AG04450 (cell line): ENCODE measurements at regions of chr4 and their contacts with region 1.

Region 1: DNA sequence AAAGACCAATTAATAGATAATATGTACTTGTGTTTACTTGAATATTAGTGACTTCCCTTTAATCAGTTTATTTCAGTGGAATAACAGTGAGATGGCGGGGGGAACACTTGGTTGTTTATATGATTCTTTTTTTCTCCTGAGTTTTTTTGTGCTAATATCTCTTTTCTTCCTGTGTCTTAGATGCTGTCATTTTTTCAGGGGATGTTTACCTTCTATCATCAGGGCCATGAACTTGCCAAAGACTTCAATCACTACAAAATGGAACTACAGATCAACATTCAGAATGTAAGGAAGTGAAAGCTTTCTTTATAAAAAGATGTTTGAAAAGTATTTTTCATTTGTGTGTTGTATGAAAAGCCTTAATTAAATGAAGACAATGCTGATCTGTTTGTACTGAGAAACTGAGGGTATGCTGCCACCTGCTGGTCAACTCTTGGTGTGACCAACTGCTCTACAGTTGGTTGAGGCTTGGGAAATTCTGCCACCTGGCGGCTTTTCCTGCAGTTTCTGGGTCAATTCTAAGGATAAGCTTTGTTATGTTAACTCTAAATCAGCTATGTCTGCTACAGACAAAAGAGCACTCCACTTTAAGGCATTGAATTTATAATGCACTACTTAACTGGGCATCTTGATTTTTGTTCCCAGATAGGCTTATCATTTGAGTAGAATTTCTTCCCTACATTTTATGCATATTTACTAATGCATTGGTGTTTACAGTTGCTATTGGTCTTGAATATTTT is 134.8 kb downstream of the ARHGAP10 start:
- DNase-seq: peak; percentile 85
- H3K4me3 ChIP-seq: no peak overlapping the region
- H3K27ac ChIP-seq: no peak overlapping the region
- H3K27me3 ChIP-seq: no peaks in the 10 kb centered on the region
- CTCF ChIP-seq: peak; percentile 99

Region 2: GRCh38 chr4:147111033-147111367 is 755.7 kb before region 1 on chr4:
- CTCF ChIA-PET with region 1: interaction called, 18 read pairs
- POLR2A ChIA-PET with region 1: no interaction called
- DNase-seq: no peak
- H3K4me3 ChIP-seq: no peak overlapping the region
- H3K27ac ChIP-seq: no peak overlapping the region
- H3K27me3 ChIP-seq: no peaks in the 10 kb centered on the region
- CTCF ChIP-seq: no peak; the same call in 1 of the 2 replicates

Region 3: DNA sequence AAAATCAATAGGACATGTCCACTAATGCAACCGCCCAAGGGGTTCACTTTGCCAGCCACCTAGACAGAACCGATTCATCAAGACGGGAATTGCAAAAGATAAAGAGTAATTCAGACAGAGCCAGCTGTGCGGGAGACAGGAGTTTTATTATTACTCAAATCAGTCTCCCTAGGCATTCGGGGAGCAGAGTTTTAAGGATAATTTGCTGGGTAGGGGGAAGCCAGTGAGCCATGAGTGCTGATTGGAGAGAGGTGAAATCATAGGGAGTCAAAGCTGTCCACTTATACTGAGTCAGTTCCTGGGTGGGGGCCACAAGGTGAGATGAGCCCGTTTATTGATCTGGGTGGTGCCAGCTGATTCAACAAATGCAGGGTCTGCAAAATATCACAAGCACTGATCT is 241.0 kb before region 1 on chr4:
- CTCF ChIA-PET with region 1: interaction called, 82 read pairs
- POLR2A ChIA-PET with region 1: no interaction called
- DNase-seq: no peak
- H3K4me3 ChIP-seq: no peak overlapping the region
- H3K27ac ChIP-seq: no peak overlapping the region
- H3K27me3 ChIP-seq: no peaks in the 10 kb centered on the region
- CTCF ChIP-seq: no peak

Region 4: DNA sequence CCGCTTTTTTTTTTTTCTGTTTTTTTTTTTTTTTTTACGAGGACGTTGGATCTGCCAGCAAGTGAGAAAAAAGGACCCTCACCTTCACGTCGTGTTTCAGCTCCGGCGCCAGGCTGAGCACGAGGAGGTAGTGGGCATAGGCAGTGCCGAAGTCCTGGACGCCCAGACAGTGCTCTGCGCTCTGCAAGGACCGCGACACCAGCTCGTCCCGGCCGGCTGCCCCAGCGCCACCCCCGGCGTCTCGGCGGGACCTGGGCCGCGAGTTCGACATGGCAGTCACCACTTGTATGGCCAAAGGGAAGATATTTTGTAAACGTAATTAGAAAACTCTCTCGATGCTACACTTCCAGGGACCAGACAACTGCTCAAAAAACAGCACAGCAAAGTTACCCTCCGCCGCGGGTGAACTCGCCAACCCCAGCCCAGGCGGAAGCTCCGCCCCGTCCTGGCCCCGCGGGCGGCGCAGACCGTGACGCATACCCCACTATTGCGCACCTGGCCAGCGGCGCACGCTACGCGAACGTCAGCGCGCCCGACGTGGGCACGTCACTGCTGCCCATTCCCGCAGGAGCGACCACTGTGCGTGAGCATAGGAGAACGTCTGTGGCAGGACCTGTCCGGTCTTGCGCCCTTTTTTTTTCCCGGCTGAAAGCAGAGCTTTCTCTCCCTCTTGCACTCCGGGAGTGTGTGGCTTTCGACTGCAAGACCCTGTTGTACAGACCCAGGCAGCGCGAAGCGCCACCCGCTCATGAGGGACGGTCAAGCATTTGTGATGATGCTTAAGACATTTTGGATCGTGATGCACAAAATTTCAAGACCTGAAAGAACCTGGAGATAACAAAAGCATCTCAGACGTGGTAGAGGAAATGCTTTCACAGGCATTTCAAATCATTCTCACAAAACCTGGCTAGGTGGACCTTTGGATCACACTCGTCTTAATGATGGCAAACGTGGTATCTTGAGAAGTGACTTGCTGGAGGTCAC is 182.7 kb before region 1 on chr4 and contains the start of gene PRMT9:
- CTCF ChIA-PET with region 1: interaction called, 113 read pairs
- POLR2A ChIA-PET with region 1: interaction called, 3 read pairs
- DNase-seq: peak; percentile 80
- H3K4me3 ChIP-seq: peak within 1 kb of the TSS; percentile 87
- H3K27ac ChIP-seq: peak within 1 kb of the TSS; percentile 87
- H3K27me3 ChIP-seq: no peaks in the 10 kb centered on the region
- CTCF ChIP-seq: no peak
- polyA plus RNA-seq, gene PRMT9: 9.4 and 12.4 TPM in 2 replicates

Region 5: DNA sequence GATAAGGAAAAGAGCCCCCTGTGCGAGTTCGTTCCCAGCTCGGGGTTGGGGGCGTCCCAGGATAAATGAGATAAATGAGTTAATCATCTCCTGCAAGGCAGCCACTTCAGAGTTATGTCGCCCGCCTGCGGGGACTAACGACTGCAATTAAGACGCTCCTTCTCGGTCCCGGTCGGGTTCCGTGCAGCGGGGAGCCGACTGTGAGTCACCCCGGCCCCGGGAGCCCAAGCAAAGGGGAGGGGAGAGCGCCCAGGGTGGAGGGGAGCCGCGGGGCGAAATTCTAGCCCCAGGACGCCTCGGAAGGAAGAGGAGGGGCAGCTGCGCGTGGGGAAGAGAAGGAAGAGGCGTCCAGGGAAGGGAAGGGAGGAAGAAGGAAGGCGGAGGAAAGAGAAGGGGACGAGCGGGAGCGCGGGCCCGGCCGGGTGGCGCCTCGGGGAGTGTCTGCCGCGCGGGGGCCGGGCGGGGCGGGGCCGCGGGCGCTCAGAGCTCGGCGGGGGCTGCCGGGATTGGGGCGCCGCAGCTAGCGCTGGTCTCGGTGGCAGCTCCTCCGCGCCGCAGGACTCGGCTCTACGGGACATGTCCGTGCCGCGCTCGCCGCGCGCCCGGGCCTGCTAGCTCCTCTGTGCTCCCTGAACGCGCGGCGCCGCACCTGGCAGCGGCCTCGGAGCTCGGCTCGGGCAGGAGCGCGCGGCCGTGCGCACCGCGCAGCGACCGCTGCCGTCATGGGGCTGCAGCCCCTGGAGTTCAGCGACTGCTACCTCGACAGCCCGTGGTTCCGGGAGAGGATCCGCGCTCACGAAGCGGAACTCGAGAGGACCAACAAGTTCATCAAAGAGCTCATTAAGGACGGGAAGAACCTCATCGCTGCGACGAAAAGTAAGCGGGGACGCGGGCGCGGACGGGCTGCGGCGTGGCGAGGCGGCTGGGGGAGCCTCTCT is 134.9 kb before region 1 on chr4 and contains the start of gene ARHGAP10:
- CTCF ChIA-PET with region 1: interaction called, 83 read pairs
- POLR2A ChIA-PET with region 1: interaction called, 10 read pairs
- DNase-seq: peak; percentile 49
- H3K4me3 ChIP-seq: peak within 1 kb of the TSS; percentile 73
- H3K27ac ChIP-seq: peak within 1 kb of the TSS; percentile 83
- H3K27me3 ChIP-seq: no peaks in the 10 kb centered on the region
- CTCF ChIP-seq: no peak
- polyA plus RNA-seq, gene ARHGAP10: 29.3 and 31.1 TPM in 2 replicates

Region 6: DNA sequence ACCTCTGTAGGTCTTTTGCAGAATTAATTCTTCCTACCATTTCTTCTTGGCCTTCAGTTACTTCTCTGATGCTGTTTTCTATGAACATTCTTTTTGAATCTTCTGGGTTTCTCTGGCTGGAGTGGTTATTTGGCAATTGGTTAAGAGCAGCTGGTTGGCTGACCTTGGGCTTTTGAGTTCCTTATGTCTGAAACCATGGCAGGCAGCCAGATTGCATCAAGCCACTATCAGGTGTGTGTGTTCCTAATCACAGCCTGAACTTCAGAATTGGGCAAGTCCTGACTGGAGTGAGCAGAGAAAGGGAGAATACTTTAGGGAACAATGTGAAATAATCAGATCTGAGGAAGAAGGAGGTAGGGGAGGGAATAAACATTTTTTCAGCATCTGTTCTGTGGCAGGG is 44.6 kb before region 1 on chr4:
- CTCF ChIA-PET with region 1: interaction called, 24 read pairs
- POLR2A ChIA-PET with region 1: no interaction called
- DNase-seq: no peak
- H3K4me3 ChIP-seq: no peak overlapping the region
- H3K27ac ChIP-seq: no peak overlapping the region
- H3K27me3 ChIP-seq: no peaks in the 10 kb centered on the region
- CTCF ChIP-seq: no peak

Region 7: GRCh38 chr4:147899512-147899911 is 32.8 kb after region 1 on chr4:
- CTCF ChIA-PET with region 1: interaction called, 15 read pairs
- POLR2A ChIA-PET with region 1: no interaction called
- DNase-seq: no peak
- H3K4me3 ChIP-seq: no peak overlapping the region
- H3K27ac ChIP-seq: no peak overlapping the region
- H3K27me3 ChIP-seq: no peaks in the 10 kb centered on the region
- CTCF ChIP-seq: no peak

Region 8: GRCh38 chr4:148261848-148262247 is 395.1 kb after region 1 on chr4:
- CTCF ChIA-PET with region 1: no interaction called
- POLR2A ChIA-PET with region 1: no interaction called
- DNase-seq: no peak
- H3K4me3 ChIP-seq: no peak overlapping the region
- H3K27ac ChIP-seq: no peak overlapping the region
- H3K27me3 ChIP-seq: no peaks in the 10 kb centered on the region
- CTCF ChIP-seq: no peak

Region 9: DNA sequence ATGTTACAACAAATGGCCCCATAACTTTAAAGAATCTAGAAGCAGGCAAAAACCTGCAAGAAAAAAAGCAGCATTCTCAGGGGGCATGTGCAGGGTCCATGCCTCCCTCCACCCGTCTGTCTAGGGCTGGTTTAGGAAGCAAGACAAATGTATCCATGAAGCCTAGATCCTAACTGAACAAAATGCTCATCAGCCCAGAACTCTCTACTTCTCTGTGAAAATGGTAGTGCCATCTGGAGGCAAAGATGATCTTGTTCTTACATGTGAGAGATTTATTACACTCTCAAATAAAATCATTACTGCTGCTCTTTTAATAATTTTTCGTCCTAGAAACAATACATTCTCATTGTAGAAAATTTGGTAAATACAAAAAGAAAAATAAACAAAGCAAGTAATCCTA is 548.8 kb after region 1 on chr4:
- CTCF ChIA-PET with region 1: no interaction called
- POLR2A ChIA-PET with region 1: no interaction called
- DNase-seq: no peak
- H3K4me3 ChIP-seq: no peak overlapping the region
- H3K27ac ChIP-seq: no peak overlapping the region
- H3K27me3 ChIP-seq: no peaks in the 10 kb centered on the region
- CTCF ChIP-seq: no peak